GM10248 (cell line): ENCODE measurements at regions of chr12 and their contacts with region 1.

Region 1: DNA sequence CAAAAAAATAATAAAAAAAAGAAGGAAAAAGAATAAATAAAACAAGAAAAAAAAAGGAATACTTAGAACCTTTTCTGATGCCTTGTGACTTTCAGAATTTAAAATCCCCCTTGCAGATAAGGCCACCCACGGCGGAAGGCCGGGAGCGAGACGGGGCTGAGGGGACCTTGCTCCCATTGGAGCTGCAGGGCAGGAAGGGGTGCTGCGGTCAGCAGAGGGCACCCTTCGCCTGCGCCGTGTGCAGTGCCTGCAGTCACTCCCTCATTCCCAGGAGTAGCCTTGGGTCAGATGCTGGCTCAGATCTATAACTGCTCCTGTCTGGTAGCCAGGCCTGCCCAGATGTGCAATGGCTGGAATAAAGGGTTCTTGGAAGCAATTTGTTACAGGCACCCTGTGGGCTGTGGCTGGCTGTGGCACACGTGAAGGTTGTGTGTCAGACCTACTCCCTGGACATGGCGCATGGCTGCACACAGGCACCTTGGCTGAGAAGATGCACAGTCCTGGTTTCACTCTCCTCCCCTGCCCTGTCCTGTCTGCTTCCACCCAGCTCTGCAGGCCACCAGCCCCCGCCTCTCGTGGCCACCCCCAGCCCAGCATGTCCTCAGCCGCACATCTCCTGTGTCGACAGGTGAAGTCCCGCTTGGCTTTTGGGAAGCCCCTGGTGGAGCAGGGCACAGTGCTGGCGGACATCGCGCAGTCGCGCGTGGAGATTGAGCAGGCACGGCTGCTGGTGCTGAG is 13.4 kb upstream of the ALDH2 start:
- DNase-seq: peak; percentile 75
- CTCF ChIP-seq: peak; percentile 66

Region 2: DNA sequence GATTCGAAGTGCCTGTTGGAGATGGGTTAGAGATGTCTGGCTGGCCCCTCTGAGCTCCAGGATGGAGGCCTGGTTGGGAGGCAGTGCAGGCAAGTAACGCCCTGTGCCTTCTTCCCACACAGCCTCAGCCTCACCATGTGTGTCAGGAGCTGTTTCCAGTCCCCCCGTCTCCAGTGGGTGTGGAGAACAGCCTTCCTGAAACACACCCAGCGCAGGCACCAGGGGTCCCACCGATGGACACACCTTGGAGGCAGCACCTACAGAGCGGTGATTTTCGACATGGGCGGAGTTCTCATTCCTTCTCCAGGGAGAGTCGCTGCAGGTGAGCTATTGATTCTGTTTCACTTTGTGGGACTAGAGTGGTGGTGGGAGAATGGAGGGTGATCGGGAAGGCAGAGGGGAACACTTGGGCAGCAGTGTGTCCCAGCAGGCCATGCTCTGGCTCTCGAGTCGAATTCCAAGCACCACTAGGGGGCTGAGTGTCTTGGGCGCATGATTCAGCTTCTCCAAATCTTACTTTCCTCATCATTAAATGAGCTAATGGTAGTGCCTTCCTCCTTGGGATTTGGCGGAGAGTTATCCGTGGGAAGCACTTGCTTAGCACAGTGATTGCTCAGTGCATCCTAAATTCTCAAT is 60.6 kb before region 1 on chr12:
- CTCF ChIA-PET with region 1: no interaction called
- POLR2A ChIA-PET with region 1: no interaction called
- DNase-seq: no peak
- CTCF ChIP-seq: peak; percentile 22

Region 3: DNA sequence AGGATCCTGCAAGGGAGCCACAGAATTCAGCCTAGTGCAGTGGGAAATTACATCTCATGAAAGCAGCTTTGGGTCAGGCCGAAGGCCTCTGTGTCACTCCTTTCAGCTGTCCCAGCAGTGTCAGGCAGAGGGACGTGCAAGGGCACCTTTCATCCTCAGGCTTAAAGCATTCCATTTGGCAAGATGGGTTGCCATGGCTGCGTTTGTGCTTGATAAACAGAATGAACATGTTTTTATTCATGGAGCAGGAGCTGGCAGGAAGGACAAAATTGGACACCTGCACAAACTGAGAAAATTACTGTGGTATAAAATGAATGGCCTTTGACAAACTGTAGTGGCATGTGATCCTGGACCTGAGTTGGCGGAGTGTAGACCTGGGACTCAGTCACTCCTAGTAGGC is 38.0 kb before region 1 on chr12:
- CTCF ChIA-PET with region 1: no interaction called
- POLR2A ChIA-PET with region 1: no interaction called
- DNase-seq: no peak
- CTCF ChIP-seq: no peak

Region 4: GRCh38 chr12:111764120-111764821 is 11.0 kb after region 1 on chr12:
- CTCF ChIA-PET with region 1: interaction called, 12 read pairs
- POLR2A ChIA-PET with region 1: no interaction called
- DNase-seq: no peak
- CTCF ChIP-seq: no peak

Region 5: DNA sequence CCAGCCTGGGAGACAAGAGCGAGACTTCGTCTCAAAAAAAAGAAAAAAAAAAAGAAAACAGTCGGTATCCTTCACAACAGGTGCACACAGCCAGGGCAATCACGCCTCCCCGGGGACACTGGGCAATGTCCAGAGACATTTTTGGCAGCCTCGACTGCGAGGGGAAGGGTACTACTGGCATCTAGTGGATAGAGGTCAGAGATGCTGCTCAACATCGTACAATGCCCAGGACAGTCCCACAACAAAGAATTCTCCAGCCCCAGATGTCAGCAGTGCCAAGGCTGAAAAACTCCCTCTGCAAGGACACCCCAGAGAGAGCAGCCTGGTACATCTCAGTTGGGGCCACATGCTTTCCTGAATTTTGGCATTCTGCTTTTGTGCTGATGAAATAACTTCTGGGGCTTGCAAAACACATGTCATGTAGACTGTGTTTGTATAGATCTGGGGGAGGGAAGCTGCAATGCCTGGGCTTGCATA is 34.9 kb after region 1 on chr12:
- CTCF ChIA-PET with region 1: interaction called, 18 read pairs
- POLR2A ChIA-PET with region 1: no interaction called
- DNase-seq: no peak
- CTCF ChIP-seq: peak; percentile 33